MCF 10A (cell line): ENCODE measurements at regions of chr20 and their contacts with region 1.

Region 1: GRCh38 chr20:63864847-63865640 is at the start of gene TPD52L2:
- DNase-seq: peak; percentile 99
- H3K4me3 Mint-ChIP-seq: peak within 1 kb of the TSS; percentile 98
- H3K27ac Mint-ChIP-seq: peak within 1 kb of the TSS; percentile 96
- H3K4me1 Mint-ChIP-seq: peaks cover 9% of the 10 kb centered on the region
- H3K27me3 Mint-ChIP-seq: no peaks in the 10 kb centered on the region
- CTCF ChIP-seq: no peak
- total RNA-seq, gene TPD52L2: 174 and 175 TPM in 2 replicates

Region 2: GRCh38 chr20:63574156-63574828 is 290.8 kb before region 1 on chr20 and contains the start of gene HELZ2:
- CTCF ChIA-PET with region 1: interaction called, 4 read pairs
- POLR2A ChIA-PET with region 1: interaction called, 12 read pairs
- intact Hi-C with region 1: no loop called
- DNase-seq: peak; percentile 65
- H3K4me3 Mint-ChIP-seq: peak within 1 kb of the TSS; percentile 78
- H3K27ac Mint-ChIP-seq: peak within 1 kb of the TSS; percentile 87
- H3K4me1 Mint-ChIP-seq: no peaks in the 10 kb centered on the region
- H3K27me3 Mint-ChIP-seq: no peaks in the 10 kb centered on the region
- CTCF ChIP-seq: no peak
- total RNA-seq, gene HELZ2: 18.1 and 24.7 TPM in 2 replicates

Region 3: DNA sequence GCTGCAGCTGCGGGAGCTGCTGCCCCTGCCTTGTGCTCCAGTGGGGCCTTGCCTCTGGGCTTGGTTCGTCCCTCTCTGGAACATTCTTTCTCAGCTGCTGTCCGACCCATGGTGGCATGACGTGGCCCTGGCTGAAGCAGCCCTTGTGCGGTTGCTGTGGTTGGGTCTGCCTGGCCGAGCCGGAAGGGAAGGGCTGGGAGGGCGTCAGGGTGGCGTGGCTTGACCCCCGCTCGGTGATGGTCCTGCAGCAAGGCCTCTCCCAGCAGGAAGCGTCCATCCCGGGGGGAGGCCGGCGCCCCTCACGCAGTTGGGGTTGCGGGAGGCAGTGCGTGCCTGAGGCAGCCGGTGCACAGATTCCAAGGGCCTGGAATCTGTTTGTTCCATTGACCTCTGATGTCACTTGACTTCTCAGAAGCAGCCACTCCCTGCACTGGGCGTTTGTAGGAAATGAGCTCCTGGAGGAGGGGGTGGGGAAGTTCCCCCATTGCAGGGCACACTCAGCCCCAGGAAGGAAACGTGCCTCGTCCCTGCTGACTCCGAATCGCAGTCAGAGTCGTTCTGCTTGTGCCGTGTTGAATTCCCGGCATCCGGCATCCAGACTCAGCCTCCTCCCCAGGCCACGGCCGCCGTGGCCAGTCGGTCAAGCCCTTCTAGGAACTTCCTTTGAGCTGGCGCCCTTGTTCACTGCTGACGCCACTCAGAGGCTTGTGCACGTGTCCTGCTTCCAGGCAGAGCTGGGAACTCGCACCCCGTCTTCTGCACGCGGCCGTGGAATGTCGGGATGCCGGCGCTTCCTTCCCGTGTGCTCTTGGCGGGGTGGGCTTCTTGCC is 178.3 kb before region 1 on chr20:
- CTCF ChIA-PET with region 1: no interaction called
- POLR2A ChIA-PET with region 1: interaction called, 18 read pairs
- intact Hi-C with region 1: no loop called
- DNase-seq: peak; percentile 85
- H3K4me3 Mint-ChIP-seq: no peak overlapping the region
- H3K27ac Mint-ChIP-seq: no peak overlapping the region
- H3K4me1 Mint-ChIP-seq: peaks cover 12% of the 10 kb centered on the region
- H3K27me3 Mint-ChIP-seq: no peaks in the 10 kb centered on the region
- CTCF ChIP-seq: no peak

Region 4: DNA sequence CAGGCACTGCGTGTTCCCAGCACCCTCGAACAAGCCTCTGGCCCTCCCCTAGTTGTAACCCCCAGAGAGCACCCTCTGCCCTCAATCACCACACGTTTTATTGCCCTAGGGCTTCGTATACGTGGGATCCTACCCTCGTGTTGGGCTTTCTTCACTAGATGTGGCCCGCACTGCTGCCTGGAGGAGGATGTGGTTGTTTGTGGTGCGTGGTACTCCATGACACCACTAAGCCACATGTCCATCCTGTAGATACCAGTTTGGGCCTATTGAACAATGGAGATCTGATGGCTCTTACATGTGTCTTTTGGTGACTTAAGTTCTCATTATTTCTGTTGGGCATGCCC is 108.4 kb before region 1 on chr20:
- CTCF ChIA-PET with region 1: no interaction called
- POLR2A ChIA-PET with region 1: no interaction called
- intact Hi-C with region 1: no loop called
- DNase-seq: no peak
- H3K4me3 Mint-ChIP-seq: no peak overlapping the region
- H3K27ac Mint-ChIP-seq: no peak overlapping the region
- H3K4me1 Mint-ChIP-seq: no peaks in the 10 kb centered on the region
- H3K27me3 Mint-ChIP-seq: peaks cover 31% of the 10 kb centered on the region
- CTCF ChIP-seq: no peak

Region 5: GRCh38 chr20:63785691-63786131 is 79.3 kb before region 1 on chr20:
- CTCF ChIA-PET with region 1: interaction called, 16 read pairs
- POLR2A ChIA-PET with region 1: interaction called, 15 read pairs
- intact Hi-C with region 1: loop called (anchors 2 kb)
- DNase-seq: no peak
- H3K4me3 Mint-ChIP-seq: no peak overlapping the region
- H3K27ac Mint-ChIP-seq: no peak overlapping the region
- H3K4me1 Mint-ChIP-seq: no peaks in the 10 kb centered on the region
- H3K27me3 Mint-ChIP-seq: no peaks in the 10 kb centered on the region
- CTCF ChIP-seq: no peak

Region 6: GRCh38 chr20:63894358-63895201 is 29.5 kb after region 1 on chr20 and contains the start of gene DNAJC5:
- CTCF ChIA-PET with region 1: interaction called, 11 read pairs
- POLR2A ChIA-PET with region 1: interaction called, 142 read pairs
- intact Hi-C with region 1: no loop called
- DNase-seq: peak; percentile 93
- H3K4me3 Mint-ChIP-seq: peak within 1 kb of the TSS; percentile 66
- H3K27ac Mint-ChIP-seq: peak within 1 kb of the TSS; percentile 88
- H3K4me1 Mint-ChIP-seq: peaks cover 29% of the 10 kb centered on the region
- H3K27me3 Mint-ChIP-seq: no peaks in the 10 kb centered on the region
- CTCF ChIP-seq: no peak
- total RNA-seq, gene DNAJC5: 38.1 and 45.0 TPM in 2 replicates

Region 7: GRCh38 chr20:63980806-63981728 is 116.0 kb after region 1 on chr20 and contains the start of gene PRPF6:
- CTCF ChIA-PET with region 1: interaction called, 5 read pairs
- POLR2A ChIA-PET with region 1: interaction called, 93 read pairs
- intact Hi-C with region 1: no loop called
- DNase-seq: peak; percentile 96
- H3K4me3 Mint-ChIP-seq: peak within 1 kb of the TSS; percentile 79
- H3K27ac Mint-ChIP-seq: peak within 1 kb of the TSS; percentile 92
- H3K4me1 Mint-ChIP-seq: peaks cover 30% of the 10 kb centered on the region
- H3K27me3 Mint-ChIP-seq: no peaks in the 10 kb centered on the region
- CTCF ChIP-seq: peak; percentile 77
- total RNA-seq, gene PRPF6: 70.9 and 88.5 TPM in 2 replicates